ENCODE measurements at regions of chr3 and their contacts with region 1.

Region 1: DNA sequence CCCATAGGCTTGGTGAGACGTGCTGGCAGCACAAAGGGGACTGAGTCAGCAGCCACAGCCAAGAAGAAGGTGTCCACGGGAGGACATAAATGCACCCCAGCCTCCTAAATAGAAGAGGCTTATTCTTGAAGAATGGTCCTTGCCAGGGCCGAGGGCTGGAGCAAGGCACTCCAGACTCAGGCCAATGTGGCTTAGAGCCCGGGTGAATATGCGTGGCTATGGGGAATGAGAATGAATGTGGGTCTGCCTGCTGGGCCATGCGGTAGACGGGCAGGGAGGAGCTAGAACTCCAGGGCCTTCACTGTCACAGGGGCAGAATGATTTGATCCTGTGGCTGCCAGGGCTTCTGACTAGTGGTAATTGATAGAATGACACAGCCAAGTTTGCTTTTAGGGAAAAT is 34.0 kb downstream of the DHX30 start:
- DNase-seq: no peak
- ATAC-seq: no peak
- H3K4me3 ChIP-seq: no peak overlapping the region
- H3K4me3 Mint-ChIP-seq: no peak overlapping the region
- H3K27ac ChIP-seq: no peak overlapping the region
- H3K27ac Mint-ChIP-seq: peak overlapping the region in 6 of 9 donors; percentile 35 to 56 (median 50)
- H3K4me1 ChIP-seq: no peaks in the 10 kb centered on the region
- H3K4me1 Mint-ChIP-seq: peaks cover 0 to 12% (median 7%) of the 10 kb centered on the region in 7 donors
- H3K27me3 ChIP-seq: no peaks in the 10 kb centered on the region
- H3K27me3 Mint-ChIP-seq: no peaks in the 10 kb centered on the region

Region 2: GRCh38 chr3:47057212-47057671 is 779.7 kb before region 1 on chr3:
- CTCF ChIA-PET with region 1: no interaction called
- POLR2A ChIA-PET with region 1: no interaction called
- intact Hi-C with region 1: no loop called
- DNase-seq: peak in 8 of 9 donors; percentile 32 to 75 (median 58)
- ATAC-seq: peak; percentile 88
- H3K4me3 ChIP-seq: no peak overlapping the region
- H3K4me3 Mint-ChIP-seq: peak overlapping the region in 9 of 10 donors; percentile 15 to 60 (median 45)
- H3K27ac ChIP-seq: peak overlapping the region; percentile 23
- H3K27ac Mint-ChIP-seq: peak overlapping the region; percentile 51 to 91 (median 85)
- H3K4me1 ChIP-seq: peaks cover 15 to 18% of the 10 kb centered on the region in 2 donors
- H3K4me1 Mint-ChIP-seq: peaks cover 23 to 60% (median 47%) of the 10 kb centered on the region in 7 donors
- H3K27me3 ChIP-seq: no peaks in the 10 kb centered on the region
- H3K27me3 Mint-ChIP-seq: no peaks in the 10 kb centered on the region

Region 3: DNA sequence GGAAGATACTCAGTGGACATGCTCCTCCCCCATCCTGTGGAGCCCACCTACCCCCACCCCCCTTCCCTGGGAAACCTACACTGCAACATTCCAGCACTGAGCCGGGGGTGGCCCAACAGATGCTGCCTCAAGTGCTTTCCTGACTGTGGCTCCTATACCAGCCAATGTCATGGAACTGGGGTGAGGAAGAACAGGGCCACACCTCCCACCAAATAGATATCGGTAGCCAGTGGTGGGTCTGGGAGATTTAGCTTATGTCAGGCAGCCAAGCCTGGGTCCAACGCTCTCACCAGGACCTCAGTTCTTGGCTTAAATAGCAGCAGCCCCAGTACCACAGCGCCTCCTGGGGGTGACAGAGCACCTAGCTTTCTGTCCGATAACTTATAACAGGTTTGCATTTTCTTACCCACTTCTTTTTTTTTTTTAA is 321.0 kb after region 1 on chr3:
- CTCF ChIA-PET with region 1: no interaction called
- POLR2A ChIA-PET with region 1: no interaction called
- intact Hi-C with region 1: loop called in 1 of 2 experiments (anchors 2 kb)
- DNase-seq: peak in 6 of 9 donors; percentile 17 to 42 (median 22)
- ATAC-seq: peak; percentile 37
- H3K4me3 ChIP-seq: no peak overlapping the region
- H3K4me3 Mint-ChIP-seq: no peak overlapping the region
- H3K27ac ChIP-seq: no peak overlapping the region
- H3K27ac Mint-ChIP-seq: no peak overlapping the region
- H3K4me1 ChIP-seq: no peaks in the 10 kb centered on the region
- H3K4me1 Mint-ChIP-seq: no peaks in the 10 kb centered on the region
- H3K27me3 ChIP-seq: no peaks in the 10 kb centered on the region
- H3K27me3 Mint-ChIP-seq: no peaks in the 10 kb centered on the region

Measured in naive thymus-derived CD4-positive, alpha-beta T cell (primary cell).